Ovary (tissue), 10 donors: ENCODE measurements at regions of chr19 and their contacts with region 1.

Region 1: DNA sequence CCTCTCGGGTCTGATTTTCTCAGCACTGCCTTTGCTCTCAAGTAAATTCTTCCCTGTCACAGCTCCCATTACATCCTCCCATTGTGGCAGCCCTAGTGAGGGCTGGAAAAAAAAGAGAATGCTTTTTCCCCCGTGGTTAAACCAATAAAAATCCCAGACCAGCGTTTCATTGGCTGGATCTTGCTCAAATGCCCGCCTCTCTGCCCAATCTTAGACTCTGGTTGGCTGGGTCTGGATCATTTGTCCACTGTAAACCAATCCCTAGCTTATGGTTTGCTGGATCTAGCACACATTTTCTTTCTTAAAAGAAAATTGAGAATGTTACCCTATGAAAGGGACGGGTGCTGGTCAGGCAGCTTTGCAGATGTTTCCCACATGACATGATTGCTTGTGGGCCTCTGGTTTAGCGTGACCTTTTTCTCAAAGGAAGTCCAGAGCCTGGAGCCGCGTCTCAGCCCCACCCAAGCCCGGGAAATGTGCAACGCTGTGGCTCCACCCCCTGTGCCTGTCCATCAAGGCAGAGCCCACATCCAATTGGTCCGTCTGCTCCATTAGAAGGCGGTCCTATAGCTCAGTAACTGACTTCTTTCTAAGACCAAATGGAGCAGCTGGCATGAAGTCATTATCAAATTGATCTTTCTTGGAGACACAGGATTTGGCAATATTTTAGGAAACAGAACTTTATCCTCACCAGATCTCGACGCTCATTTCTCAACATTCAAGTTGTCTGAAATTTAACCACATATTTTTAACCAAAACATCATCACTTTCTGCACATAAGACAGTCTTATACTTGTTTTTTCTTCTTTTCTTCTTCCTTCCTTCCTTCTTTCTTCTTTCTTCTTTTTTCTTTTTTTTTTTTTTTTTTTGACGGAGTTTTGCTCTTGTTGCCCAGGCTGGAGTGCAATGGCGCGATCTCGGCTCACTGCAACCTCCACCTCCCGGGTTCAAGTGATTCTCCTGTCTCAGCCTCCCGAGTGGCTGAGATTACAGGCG is 2.6 kb upstream of the MCEMP1 start:
- DNase-seq: no peak
- H3K4me3 ChIP-seq: no peak overlapping the region
- H3K27ac ChIP-seq: no peak overlapping the region
- H3K4me1 ChIP-seq: no peaks in the 10 kb centered on the region
- H3K27me3 ChIP-seq: no peaks in the 10 kb centered on the region
- CTCF ChIP-seq: no peak
- EP300 ChIP-seq: no peak
- POLR2A ChIP-seq: no peak

Region 2: DNA sequence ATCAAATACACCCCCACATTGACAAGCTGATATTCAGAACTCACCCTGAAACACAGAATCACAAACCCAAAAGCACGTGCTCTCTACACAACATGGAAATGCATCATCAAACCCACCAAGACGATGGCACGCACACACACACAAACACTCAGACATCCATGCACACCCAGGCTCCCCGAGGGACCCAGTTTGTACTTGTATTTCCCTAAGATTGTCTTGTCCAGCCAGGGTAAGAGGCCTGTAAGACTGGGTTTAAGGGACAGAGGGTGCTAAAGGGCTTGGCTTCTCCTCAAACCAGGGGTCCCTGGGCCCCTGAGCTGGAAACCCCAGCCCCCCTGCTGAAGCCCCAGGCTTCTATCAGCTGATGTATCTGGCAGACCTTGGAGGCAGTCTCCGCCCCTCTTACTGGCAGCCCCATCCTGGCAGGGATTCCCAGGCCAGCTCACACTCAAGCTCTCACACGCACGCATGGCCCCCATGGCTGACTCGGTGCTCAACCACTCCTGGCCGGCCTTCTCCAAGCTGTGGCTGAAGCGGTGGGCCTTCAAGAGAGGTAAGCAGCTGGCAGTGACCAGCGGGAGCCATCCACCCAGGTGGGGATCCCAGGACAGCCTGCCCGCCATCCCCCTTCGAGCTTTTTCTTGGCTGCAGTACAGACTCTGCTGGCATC is 319.0 kb before region 1 on chr19:
- intact Hi-C with region 1: loop called in 2 of 4 experiments (anchors 5 to 10 kb)
- DNase-seq: peak in 1 of 5 donors; percentile 33
- H3K4me3 ChIP-seq: peak overlapping the region; percentile 6
- H3K27ac ChIP-seq: no peak overlapping the region
- H3K4me1 ChIP-seq: no peaks in the 10 kb centered on the region
- H3K27me3 ChIP-seq: no peaks in the 10 kb centered on the region
- CTCF ChIP-seq: no peak
- EP300 ChIP-seq: no peak
- POLR2A ChIP-seq: no peak

Region 3: DNA sequence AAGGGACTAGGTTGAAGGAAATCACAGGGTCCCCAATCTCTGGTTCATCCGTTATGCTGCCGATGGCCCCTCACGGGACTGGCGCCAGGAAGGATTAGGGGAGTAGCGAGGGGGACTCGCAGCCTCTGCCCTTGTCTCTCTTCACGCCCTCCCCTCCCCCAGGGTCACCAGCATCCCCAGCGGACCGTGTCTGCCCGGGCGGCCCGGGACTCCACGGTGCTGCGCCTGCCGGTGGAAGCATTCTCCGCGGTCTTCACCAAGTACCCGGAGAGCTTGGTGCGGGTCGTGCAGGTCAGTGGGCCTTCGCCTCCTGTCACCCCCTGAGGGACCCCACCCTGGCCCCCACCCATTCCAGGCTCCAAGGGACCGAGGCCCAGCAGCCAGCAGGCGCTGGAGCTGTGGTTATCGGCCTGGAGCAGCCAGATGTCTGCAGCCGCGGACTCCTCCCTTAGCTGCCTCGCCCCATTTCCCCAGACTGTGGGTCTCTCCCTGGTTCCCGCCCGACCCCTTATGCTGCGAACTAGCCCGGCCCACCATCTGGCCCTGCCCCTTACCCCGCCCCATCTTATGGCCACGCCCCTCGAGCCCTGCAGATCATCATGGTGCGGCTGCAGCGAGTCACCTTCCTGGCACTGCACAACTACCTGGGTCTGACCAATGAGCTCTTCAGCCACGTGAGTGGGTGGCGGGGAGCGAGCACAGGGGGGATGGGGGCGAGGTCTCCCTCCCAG is 133.4 kb before region 1 on chr19:
- intact Hi-C with region 1: no loop called
- DNase-seq: peak in 3 of 5 donors; percentile 10 to 42 (median 31)
- H3K4me3 ChIP-seq: no peak overlapping the region
- H3K27ac ChIP-seq: no peak overlapping the region
- H3K4me1 ChIP-seq: no peaks in the 10 kb centered on the region
- H3K27me3 ChIP-seq: no peaks in the 10 kb centered on the region
- CTCF ChIP-seq: no peak
- EP300 ChIP-seq: no peak
- POLR2A ChIP-seq: no peak